ENCODE measurements at regions of chr4 and their contacts with region 1.

Region 1: DNA sequence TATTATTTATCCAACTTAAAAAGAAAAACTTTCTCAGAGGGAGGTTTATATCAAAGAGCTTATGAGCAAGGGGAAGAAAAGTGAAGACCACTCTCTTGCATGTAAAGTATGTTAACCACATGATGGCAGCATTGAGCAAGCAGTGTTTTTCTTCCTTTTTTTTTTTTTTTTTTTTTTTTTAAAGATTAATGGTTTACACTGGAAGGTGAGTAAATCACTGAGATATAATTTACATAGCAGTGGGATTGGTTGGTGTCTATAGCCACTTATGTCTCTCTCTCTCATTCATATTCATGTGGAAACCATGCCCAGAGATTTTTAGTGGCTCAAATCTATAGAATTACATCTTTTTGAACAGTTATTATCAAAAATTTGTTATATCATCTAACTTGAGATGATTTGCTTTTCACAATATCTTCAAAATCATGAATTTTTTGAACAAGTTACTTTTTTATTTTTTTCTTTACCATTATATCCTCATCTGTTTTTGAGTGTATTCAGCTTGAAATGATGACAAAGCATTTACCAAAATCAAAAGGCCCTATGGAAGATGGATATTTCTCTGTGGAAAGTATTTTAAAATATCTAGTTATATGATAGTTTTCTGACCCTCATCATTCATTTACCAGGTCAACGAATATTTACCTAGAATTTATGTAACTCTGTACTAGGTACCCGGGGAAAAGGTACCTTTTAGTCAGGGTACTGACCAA is 31.6 kb downstream of the MTHFD2L start:
- DNase-seq: peak; percentile 25
- ATAC-seq: peak; percentile 90
- H3K4me3 ChIP-seq: no peak overlapping the region
- H3K27ac ChIP-seq: no peak overlapping the region
- H3K4me1 ChIP-seq: no peaks in the 10 kb centered on the region
- H3K27me3 ChIP-seq: no peaks in the 10 kb centered on the region
- CTCF ChIP-seq: peak; percentile 58 to 62 (median 59); a peak in 5 of 6 replicates
- EP300 ChIP-seq: no peak
- POLR2A ChIP-seq: no peak
- RAD21 ChIP-seq: peak; percentile 89

Region 2: GRCh38 chr4:74174421-74174820 is 15.1 kb before region 1 on chr4:
- CTCF ChIA-PET with region 1: interaction called, 15 read pairs
- POLR2A ChIA-PET with region 1: no interaction called
- RAD21 ChIA-PET with region 1: interaction called, 4 read pairs
- SMC1A ChIA-PET with region 1: interaction called, 4 read pairs
- in situ Hi-C with region 1: no loop called
- intact Hi-C with region 1: no loop called
- DNase-seq: no peak
- ATAC-seq: no peak
- H3K4me3 ChIP-seq: no peak overlapping the region
- H3K27ac ChIP-seq: no peak overlapping the region
- H3K4me1 ChIP-seq: no peaks in the 10 kb centered on the region
- H3K27me3 ChIP-seq: no peaks in the 10 kb centered on the region
- CTCF ChIP-seq: no peak
- EP300 ChIP-seq: no peak
- POLR2A ChIP-seq: no peak
- RAD21 ChIP-seq: no peak

Region 3: GRCh38 chr4:74206088-74206825 is 16.8 kb after region 1 on chr4:
- CTCF ChIA-PET with region 1: interaction called, 10 read pairs
- POLR2A ChIA-PET with region 1: no interaction called
- RAD21 ChIA-PET with region 1: interaction called, 11 read pairs
- SMC1A ChIA-PET with region 1: interaction called, 7 read pairs
- in situ Hi-C with region 1: no loop called
- intact Hi-C with region 1: no loop called
- DNase-seq: peak; percentile 46
- ATAC-seq: peak; percentile 83
- H3K4me3 ChIP-seq: peak overlapping the region; percentile 51; the same call in 1 of the 2 replicates
- H3K27ac ChIP-seq: peak overlapping the region; percentile 98
- H3K4me1 ChIP-seq: peaks cover 32% of the 10 kb centered on the region
- H3K27me3 ChIP-seq: no peaks in the 10 kb centered on the region
- CTCF ChIP-seq: no peak
- EP300 ChIP-seq: no peak
- POLR2A ChIP-seq: no peak
- RAD21 ChIP-seq: no peak

Region 4: DNA sequence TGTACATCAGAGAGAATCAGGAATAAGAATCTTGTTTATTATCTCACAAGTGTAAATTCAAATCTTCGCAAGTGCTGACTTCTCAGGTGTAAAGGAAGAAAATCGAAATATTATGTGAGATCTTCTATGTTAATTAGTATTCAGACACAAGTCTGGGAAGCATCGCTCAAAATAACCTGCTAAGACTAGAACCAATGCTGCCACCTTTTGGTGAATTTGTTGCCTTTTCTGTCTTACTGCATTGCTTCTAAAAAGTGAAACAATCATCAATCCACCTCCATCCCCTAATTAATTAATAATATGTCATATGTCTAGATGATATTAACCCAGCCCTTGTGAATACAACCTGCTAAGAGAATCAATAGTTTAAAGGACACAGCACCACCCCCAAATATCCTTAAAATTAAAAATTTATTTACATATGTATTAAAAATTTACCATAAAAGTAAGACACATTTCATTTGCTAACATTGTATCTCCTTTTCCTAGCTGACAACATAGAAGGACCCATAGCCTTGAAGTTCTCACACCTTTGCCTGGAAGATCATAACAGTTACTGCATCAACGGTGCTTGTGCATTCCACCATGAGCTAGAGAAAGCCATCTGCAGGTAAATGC is 122.3 kb after region 1 on chr4:
- CTCF ChIA-PET with region 1: interaction called, 55 read pairs
- POLR2A ChIA-PET with region 1: no interaction called
- RAD21 ChIA-PET with region 1: interaction called, 8 read pairs
- SMC1A ChIA-PET with region 1: interaction called, 20 read pairs
- in situ Hi-C with region 1: loop called (anchors 5 kb)
- intact Hi-C with region 1: loop called (anchors 1 kb)
- DNase-seq: peak; percentile 13
- ATAC-seq: peak; percentile 77
- H3K4me3 ChIP-seq: no peak overlapping the region
- H3K27ac ChIP-seq: no peak overlapping the region
- H3K4me1 ChIP-seq: peaks cover 9% of the 10 kb centered on the region
- H3K27me3 ChIP-seq: no peaks in the 10 kb centered on the region
- CTCF ChIP-seq: peak; percentile 39 to 76 (median 68); a peak in 5 of 6 replicates
- EP300 ChIP-seq: no peak
- POLR2A ChIP-seq: no peak
- RAD21 ChIP-seq: peak; percentile 84

Region 5: GRCh38 chr4:74320559-74321118 is 131.2 kb after region 1 on chr4:
- CTCF ChIA-PET with region 1: interaction called, 55 read pairs
- POLR2A ChIA-PET with region 1: no interaction called
- RAD21 ChIA-PET with region 1: interaction called, 8 read pairs
- SMC1A ChIA-PET with region 1: interaction called, 13 read pairs
- in situ Hi-C with region 1: no loop called
- intact Hi-C with region 1: no loop called
- DNase-seq: peak; percentile 9
- ATAC-seq: peak; percentile 90
- H3K4me3 ChIP-seq: no peak overlapping the region
- H3K27ac ChIP-seq: no peak overlapping the region
- H3K4me1 ChIP-seq: no peaks in the 10 kb centered on the region
- H3K27me3 ChIP-seq: 0 out of 4 replicates have a peak, but pooled peaks cover 0 to 3% of the 10 kb centered on the region in 2 experiments
- CTCF ChIP-seq: peak; percentile 39 to 58 (median 50); a peak in 5 of 6 replicates
- EP300 ChIP-seq: no peak
- POLR2A ChIP-seq: no peak
- RAD21 ChIP-seq: peak; percentile 89

Region 6: DNA sequence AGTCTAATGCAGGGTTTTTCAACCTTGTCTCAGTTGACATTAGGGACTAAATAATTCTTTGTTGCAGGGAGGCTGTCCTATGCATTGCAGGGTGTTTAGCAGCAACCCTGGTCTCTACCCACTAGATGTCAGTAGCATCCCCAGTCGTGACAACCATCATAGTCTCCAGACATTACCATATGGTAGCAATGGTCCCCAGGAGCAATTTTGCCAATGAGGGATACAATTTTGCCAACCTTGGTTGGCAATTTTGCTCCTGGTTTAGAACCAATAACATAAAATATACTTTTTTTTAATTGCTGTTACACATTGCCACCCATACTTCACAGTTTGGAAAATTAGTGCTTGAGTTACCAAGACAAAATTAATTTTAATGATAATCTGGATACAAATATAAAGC is 181.4 kb after region 1 on chr4:
- CTCF ChIA-PET with region 1: no interaction called
- POLR2A ChIA-PET with region 1: no interaction called
- RAD21 ChIA-PET with region 1: interaction called, 3 read pairs
- SMC1A ChIA-PET with region 1: interaction called, 3 read pairs
- in situ Hi-C with region 1: no loop called
- intact Hi-C with region 1: loop called (anchors 2 kb)
- DNase-seq: no peak
- ATAC-seq: peak; percentile 98
- H3K4me3 ChIP-seq: no peak overlapping the region
- H3K27ac ChIP-seq: no peak overlapping the region
- H3K4me1 ChIP-seq: no peaks in the 10 kb centered on the region
- H3K27me3 ChIP-seq: peaks cover 0 to 3% of the 10 kb centered on the region in 2 experiments; a peak in 1 of 4 replicates
- CTCF ChIP-seq: peak; percentile 66 to 77 (median 71)
- EP300 ChIP-seq: no peak
- POLR2A ChIP-seq: no peak
- RAD21 ChIP-seq: peak; percentile 61

Region 7: DNA sequence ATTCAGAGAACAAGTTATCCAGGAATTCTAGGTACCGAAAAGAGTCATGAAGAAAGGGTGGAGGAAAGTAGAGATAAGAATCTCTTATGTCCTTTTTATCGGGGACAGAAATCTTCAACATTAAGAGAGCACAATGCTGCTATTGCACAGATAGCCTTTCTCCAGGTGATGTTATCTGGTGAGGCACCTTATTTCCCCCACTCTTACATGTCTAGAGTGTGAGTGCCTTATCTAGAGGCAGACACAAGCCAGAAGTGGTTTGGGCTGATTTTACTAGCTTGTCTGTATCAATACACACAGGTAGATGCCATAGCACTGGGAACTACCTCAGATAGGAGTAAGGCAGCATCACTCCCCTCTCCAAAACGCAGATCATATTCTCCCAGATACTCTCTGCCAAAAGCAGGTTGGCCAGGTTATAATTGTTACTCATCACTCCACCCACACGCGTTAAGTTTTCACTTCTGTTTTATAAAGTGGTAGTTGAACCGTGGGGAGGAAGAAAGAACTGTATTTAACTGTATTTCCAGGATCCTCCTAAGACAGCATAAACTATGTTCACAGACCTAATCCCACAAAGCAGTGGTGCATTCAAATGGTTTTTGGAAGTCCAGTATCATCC is 293.9 kb after region 1 on chr4:
- CTCF ChIA-PET with region 1: no interaction called
- POLR2A ChIA-PET with region 1: no interaction called
- RAD21 ChIA-PET with region 1: no interaction called
- SMC1A ChIA-PET with region 1: no interaction called
- in situ Hi-C with region 1: no loop called
- intact Hi-C with region 1: no loop called
- DNase-seq: no peak
- ATAC-seq: peak; percentile 31; the same call in 2 of the 3 replicates
- H3K4me3 ChIP-seq: no peak overlapping the region
- H3K27ac ChIP-seq: no peak overlapping the region
- H3K4me1 ChIP-seq: no peaks in the 10 kb centered on the region
- H3K27me3 ChIP-seq: no peaks in the 10 kb centered on the region
- CTCF ChIP-seq: no peak
- EP300 ChIP-seq: no peak
- POLR2A ChIP-seq: no peak
- RAD21 ChIP-seq: no peak

Region 8: GRCh38 chr4:74623041-74623440 is 433.6 kb after region 1 on chr4:
- CTCF ChIA-PET with region 1: interaction called, 10 read pairs
- POLR2A ChIA-PET with region 1: no interaction called
- RAD21 ChIA-PET with region 1: interaction called, 4 read pairs
- SMC1A ChIA-PET with region 1: no interaction called
- in situ Hi-C with region 1: no loop called
- intact Hi-C with region 1: no loop called
- DNase-seq: no peak
- ATAC-seq: peak; percentile 77
- H3K4me3 ChIP-seq: no peak overlapping the region
- H3K27ac ChIP-seq: no peak overlapping the region
- H3K4me1 ChIP-seq: no peaks in the 10 kb centered on the region
- H3K27me3 ChIP-seq: no peaks in the 10 kb centered on the region
- CTCF ChIP-seq: peak; percentile 45 to 71 (median 56); a peak in 5 of 6 replicates
- EP300 ChIP-seq: no peak
- POLR2A ChIP-seq: no peak
- RAD21 ChIP-seq: peak; percentile 63

Measured in GM12878 (cell line).